ENCODE measurements at regions of chr1 and their contacts with region 1.

Region 1: DNA sequence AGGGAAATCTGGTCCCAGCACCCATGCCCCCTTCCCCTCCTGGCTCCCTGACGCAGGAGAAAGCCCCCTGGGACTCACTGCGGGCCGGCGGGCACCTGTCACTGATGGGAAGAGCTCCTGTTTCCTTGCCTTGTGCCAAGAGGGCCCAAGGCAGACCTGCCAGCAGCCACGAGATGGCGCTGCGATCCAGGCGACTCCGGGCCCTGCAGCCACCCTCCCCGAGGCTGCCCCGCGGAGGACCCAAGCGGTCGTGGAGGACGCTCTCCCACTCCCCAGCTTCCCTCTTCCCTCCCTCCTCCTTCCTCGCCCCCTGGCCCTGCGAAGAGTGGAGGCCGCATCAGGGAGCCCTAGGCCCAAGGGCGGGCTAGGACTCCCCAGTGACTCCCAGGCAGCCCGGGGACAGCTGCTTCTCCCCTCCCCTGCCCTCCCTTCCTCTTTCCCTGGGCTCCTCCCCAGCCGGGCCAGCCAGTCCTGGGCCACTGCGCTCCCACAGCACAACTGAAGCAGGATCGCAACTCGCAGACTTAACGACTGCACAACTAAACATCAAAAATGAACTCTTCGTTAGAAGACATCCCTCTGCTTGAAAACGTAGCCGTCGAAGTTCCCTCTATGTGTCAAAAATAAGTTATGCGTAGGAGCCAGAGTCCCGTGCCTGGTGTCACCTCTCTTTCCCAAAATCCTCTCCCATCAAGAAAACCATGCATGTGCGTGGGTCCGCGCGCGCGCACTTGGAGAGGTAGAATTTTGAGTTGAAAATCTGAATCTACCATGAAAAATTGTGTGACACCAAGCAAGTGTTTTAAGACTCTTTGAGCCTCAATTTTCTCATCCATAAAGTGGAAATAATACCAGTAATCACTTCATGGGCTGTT is 34.2 kb downstream of the BATF3 start:
- DNase-seq: peak; percentile 66 to 77
- H3K4me3 ChIP-seq: peak overlapping the region; percentile 37 to 49
- H3K27ac ChIP-seq: peak overlapping the region; percentile 48 to 66
- H3K4me1 ChIP-seq: peaks cover 0 to 7% of the 10 kb centered on the region in 2 donors
- H3K27me3 ChIP-seq: no peaks in the 10 kb centered on the region
- CTCF ChIP-seq: peak; percentile 86 to 96 (median 92)
- POLR2A ChIP-seq: no peak

Region 2: GRCh38 chr1:212782422-212783154 is 117.1 kb after region 1 on chr1:
- intact Hi-C with region 1: loop called (anchors 10 kb)
- DNase-seq: no peak
- H3K4me3 ChIP-seq: no peak overlapping the region
- H3K27ac ChIP-seq: no peak overlapping the region
- H3K4me1 ChIP-seq: no peaks in the 10 kb centered on the region
- H3K27me3 ChIP-seq: no peaks in the 10 kb centered on the region
- CTCF ChIP-seq: peak; percentile 40 to 54 (median 49)
- POLR2A ChIP-seq: no peak

Region 3: GRCh38 chr1:212899845-212900244 is 234.4 kb after region 1 on chr1:
- intact Hi-C with region 1: no loop called
- DNase-seq: no peak
- H3K4me3 ChIP-seq: no peak overlapping the region
- H3K27ac ChIP-seq: no peak overlapping the region
- H3K4me1 ChIP-seq: no peaks in the 10 kb centered on the region
- H3K27me3 ChIP-seq: no peaks in the 10 kb centered on the region
- CTCF ChIP-seq: no peak
- POLR2A ChIP-seq: no peak

Measured in uterus (tissue), 4 donors.